Left colon (tissue), 2 donors: ENCODE measurements at regions of chr9 and their contacts with region 1.

Region 1: DNA sequence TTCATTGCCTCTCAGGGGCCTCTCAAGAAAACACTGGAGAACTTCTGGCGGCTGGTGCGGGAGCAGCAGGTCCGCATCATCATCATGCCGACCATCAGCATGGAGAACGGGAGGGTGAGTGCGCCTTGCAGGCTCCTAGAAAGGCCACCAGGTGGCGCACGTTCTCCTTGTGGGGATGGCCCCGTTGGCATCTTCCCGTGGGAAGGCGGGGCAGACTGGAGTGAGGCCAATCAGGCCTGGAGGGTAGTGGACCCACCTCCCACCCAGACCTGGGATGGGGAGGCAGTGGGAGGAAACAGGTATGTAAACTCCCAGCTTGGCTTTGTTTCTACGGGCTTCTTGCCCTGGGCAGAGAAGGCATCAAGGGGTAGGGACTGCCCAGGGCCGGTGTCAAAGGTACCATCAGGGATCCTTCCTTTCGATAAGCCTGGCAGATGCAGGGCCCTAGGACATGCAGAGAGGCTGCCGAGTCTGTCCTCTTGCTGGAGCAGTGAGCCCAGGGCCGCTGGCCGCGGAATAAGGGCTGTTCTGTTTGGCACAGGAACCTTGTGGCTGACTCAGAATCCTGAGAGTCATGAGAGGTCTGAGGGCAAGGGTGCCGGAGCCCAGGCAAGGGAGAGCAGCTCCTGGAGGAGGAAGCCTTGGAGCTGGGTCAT is 18.9 kb upstream of the SPTLC1 start:
- DNase-seq: peak; percentile 67 to 80
- ATAC-seq: peak; percentile 83

Region 2: GRCh38 chr9:92180669-92181181 is 46.6 kb after region 1 on chr9:
- intact Hi-C with region 1: no loop called
- DNase-seq: peak in 1 of 2 donors; percentile 8
- ATAC-seq: no peak

Region 3: GRCh38 chr9:92234514-92234913 is 100.4 kb after region 1 on chr9:
- intact Hi-C with region 1: loop called in 1 of 2 experiments (anchors 10 kb)
- DNase-seq: no peak
- ATAC-seq: no peak

Region 4: GRCh38 chr9:92293452-92294296 is 159.6 kb after region 1 on chr9 and contains the start of gene IARS1:
- intact Hi-C with region 1: loop called in 1 of 2 experiments (anchors 10 kb)
- DNase-seq: peak; percentile 97 to 98
- ATAC-seq: peak; percentile 100
- total RNA-seq, gene IARS1: 39.1 to 61.9 TPM

Region 5: GRCh38 chr9:92631452-92632343 is 497.6 kb after region 1 on chr9:
- intact Hi-C with region 1: no loop called
- DNase-seq: peak in 1 of 2 donors; percentile 10
- ATAC-seq: no peak

Region 6: GRCh38 chr9:92648474-92649372 is 514.6 kb after region 1 on chr9:
- intact Hi-C with region 1: loop called in 1 of 2 experiments (anchors 10 kb)
- DNase-seq: peak in 1 of 2 donors; percentile 20
- ATAC-seq: no peak